ENCODE measurements at regions of chr1 and their contacts with region 1.

Region 1: DNA sequence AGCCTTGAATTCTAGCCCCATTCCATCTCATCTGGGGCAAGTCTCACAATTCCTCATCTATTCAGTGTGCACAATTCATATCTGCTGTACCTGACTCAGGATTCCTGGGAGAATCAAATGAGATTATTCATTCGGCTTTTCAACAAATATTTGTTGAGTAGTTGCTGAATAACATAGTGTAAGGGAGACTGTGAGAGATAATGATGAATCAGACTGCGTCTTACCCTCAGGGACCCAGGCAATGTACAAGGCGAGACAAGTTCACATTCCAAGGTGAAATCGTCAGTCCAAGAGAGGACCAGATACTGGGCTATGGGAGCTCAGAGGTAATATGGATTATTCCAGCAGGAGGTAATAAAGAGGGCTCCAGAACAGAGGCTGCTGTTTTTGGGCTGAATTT is 67.8 kb upstream of the SMYD2 start:
- DNase-seq: peak in 1 of 2 experiments; percentile 21
- H3K4me3 ChIP-seq: no peak overlapping the region
- H3K4me3 Mint-ChIP-seq: no peak overlapping the region
- H3K27ac Mint-ChIP-seq: peak overlapping the region; percentile 53
- H3K4me1 ChIP-seq: peaks cover 73% of the 10 kb centered on the region
- H3K4me1 Mint-ChIP-seq: peaks cover 42% of the 10 kb centered on the region
- H3K27me3 ChIP-seq: no peaks in the 10 kb centered on the region
- H3K27me3 Mint-ChIP-seq: no peaks in the 10 kb centered on the region
- CTCF ChIP-seq: no peak

Region 2: GRCh38 chr1:213864091-213864490 is 349.0 kb before region 1 on chr1:
- CTCF ChIA-PET with region 1: no interaction called
- POLR2A ChIA-PET with region 1: no interaction called
- intact Hi-C with region 1: no loop called
- DNase-seq: no peak
- H3K4me3 ChIP-seq: no peak overlapping the region
- H3K4me3 Mint-ChIP-seq: no peak overlapping the region
- H3K27ac Mint-ChIP-seq: no peak overlapping the region
- H3K4me1 ChIP-seq: no peaks in the 10 kb centered on the region
- H3K4me1 Mint-ChIP-seq: no peaks in the 10 kb centered on the region
- H3K27me3 ChIP-seq: no peaks in the 10 kb centered on the region
- H3K27me3 Mint-ChIP-seq: no peaks in the 10 kb centered on the region
- CTCF ChIP-seq: no peak

Region 3: DNA sequence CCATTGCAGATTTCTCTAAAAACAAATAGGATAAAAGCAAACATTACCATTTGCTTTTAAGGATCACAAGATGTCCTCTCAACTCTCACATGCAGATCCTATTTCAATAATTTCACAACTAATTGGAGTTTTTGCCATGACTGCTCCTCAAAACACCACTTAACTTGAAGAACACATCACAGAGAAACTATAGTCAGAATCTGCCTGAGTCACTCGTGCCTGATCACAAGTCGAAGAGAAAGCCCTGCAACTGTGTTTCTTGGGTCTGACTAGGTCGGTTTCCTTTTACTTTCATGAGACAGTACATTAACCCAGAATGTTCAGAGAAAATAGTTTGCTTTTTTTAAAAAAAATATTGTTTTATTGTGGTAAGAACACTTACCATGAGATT is 21.5 kb after region 1 on chr1:
- CTCF ChIA-PET with region 1: no interaction called
- POLR2A ChIA-PET with region 1: interaction called, 3 read pairs
- intact Hi-C with region 1: loop called (anchors 1 kb)
- DNase-seq: no peak
- H3K4me3 ChIP-seq: no peak overlapping the region
- H3K4me3 Mint-ChIP-seq: peak overlapping the region; percentile 17
- H3K27ac Mint-ChIP-seq: peak overlapping the region; percentile 1
- H3K4me1 ChIP-seq: peaks cover 14% of the 10 kb centered on the region
- H3K4me1 Mint-ChIP-seq: peaks cover 23% of the 10 kb centered on the region
- H3K27me3 ChIP-seq: no peaks in the 10 kb centered on the region
- H3K27me3 Mint-ChIP-seq: no peaks in the 10 kb centered on the region
- CTCF ChIP-seq: no peak

Region 4: DNA sequence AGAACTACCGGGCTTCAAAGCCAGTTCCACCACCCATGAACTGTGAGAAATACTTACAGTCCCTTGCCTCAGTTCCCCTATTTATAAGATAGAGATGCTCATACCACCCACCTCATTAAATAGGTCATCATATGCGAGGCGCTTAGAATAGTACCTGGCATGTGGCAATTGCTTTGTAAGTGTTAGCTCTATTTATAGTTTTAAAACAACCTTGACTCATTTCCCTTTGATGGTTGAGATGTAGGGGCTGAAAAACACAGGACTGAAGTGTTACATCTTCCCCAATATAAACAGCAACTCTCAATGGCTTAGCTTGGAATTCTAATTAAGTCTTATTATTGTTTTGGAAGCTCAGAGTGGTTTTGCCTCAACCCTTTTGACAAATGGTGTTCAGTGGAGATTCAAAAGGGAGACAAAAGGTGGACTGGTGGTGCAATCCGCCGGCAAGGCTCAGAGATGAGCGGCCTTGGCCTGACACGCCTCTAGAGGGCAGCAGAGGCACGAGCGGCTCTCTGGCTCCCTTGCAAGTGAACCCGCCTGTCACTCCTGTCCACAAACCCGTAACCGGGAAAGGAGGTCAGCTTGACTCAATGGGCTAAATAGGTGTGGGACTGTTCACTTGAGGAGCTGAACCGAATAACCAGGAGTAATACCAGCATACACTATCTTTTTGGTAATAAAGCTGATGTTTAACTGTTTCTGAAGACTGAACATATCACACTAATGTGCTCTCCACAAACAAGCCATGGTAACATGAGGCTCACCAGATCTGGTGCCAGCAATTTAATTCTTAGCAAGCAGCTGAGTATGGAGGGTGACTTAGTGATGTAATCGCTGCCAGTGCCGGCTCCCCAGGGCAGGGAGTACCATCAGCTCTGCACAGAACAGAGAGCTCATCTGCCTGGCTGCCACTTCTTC is 48.3 kb after region 1 on chr1:
- CTCF ChIA-PET with region 1: interaction called, 20 read pairs
- POLR2A ChIA-PET with region 1: no interaction called
- intact Hi-C with region 1: loop called (anchors 1 kb)
- DNase-seq: peak; percentile 87 to 94
- H3K4me3 ChIP-seq: no peak overlapping the region
- H3K4me3 Mint-ChIP-seq: no peak overlapping the region
- H3K27ac Mint-ChIP-seq: no peak overlapping the region
- H3K4me1 ChIP-seq: peaks cover 15% of the 10 kb centered on the region; the same call in 1 of the 2 replicates
- H3K4me1 Mint-ChIP-seq: peaks cover 35% of the 10 kb centered on the region
- H3K27me3 ChIP-seq: no peaks in the 10 kb centered on the region
- H3K27me3 Mint-ChIP-seq: no peaks in the 10 kb centered on the region
- CTCF ChIP-seq: peak; percentile 90 to 99

Region 5: DNA sequence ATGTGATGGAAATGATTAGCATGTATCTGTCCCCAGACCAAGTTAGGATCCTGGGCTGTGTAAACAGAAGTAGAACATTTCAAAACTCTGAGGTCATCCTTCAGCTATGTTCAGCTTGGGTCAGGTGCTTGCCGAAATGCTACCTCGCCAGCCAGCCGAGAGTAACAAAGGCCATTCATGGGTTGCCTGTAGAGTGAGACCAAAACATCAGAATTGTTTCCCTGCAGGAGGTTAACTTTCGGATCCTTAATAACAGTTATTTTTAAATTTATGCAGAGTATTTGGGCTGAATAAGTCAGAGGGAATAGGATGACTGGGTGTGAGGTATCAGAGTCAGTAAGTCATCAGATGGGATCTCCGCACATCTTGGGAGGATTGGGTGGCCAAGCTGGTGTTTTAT is 103.5 kb after region 1 on chr1:
- CTCF ChIA-PET with region 1: interaction called, 14 read pairs
- POLR2A ChIA-PET with region 1: no interaction called
- intact Hi-C with region 1: no loop called
- DNase-seq: peak in 1 of 2 experiments; percentile 27
- H3K4me3 ChIP-seq: no peak overlapping the region
- H3K4me3 Mint-ChIP-seq: no peak overlapping the region
- H3K27ac Mint-ChIP-seq: peak overlapping the region; percentile 30
- H3K4me1 ChIP-seq: peaks cover 14% of the 10 kb centered on the region; the same call in 1 of the 2 replicates
- H3K4me1 Mint-ChIP-seq: peaks cover 14% of the 10 kb centered on the region
- H3K27me3 ChIP-seq: no peaks in the 10 kb centered on the region
- H3K27me3 Mint-ChIP-seq: no peaks in the 10 kb centered on the region
- CTCF ChIP-seq: no peak

Region 6: GRCh38 chr1:214349781-214350180 is 136.6 kb after region 1 on chr1:
- CTCF ChIA-PET with region 1: interaction called, 11 read pairs
- POLR2A ChIA-PET with region 1: interaction called, 3 read pairs
- intact Hi-C with region 1: no loop called
- DNase-seq: peak; percentile 82 to 88
- H3K4me3 ChIP-seq: no peak overlapping the region
- H3K4me3 Mint-ChIP-seq: peak overlapping the region; percentile 70
- H3K27ac Mint-ChIP-seq: peak overlapping the region; percentile 97
- H3K4me1 ChIP-seq: peaks cover 46% of the 10 kb centered on the region
- H3K4me1 Mint-ChIP-seq: peaks cover 33% of the 10 kb centered on the region
- H3K27me3 ChIP-seq: no peaks in the 10 kb centered on the region
- H3K27me3 Mint-ChIP-seq: no peaks in the 10 kb centered on the region
- CTCF ChIP-seq: no peak

Region 7: GRCh38 chr1:214427871-214428277 is 214.7 kb after region 1 on chr1:
- CTCF ChIA-PET with region 1: no interaction called
- POLR2A ChIA-PET with region 1: no interaction called
- intact Hi-C with region 1: no loop called
- DNase-seq: no peak
- H3K4me3 ChIP-seq: no peak overlapping the region
- H3K4me3 Mint-ChIP-seq: no peak overlapping the region
- H3K27ac Mint-ChIP-seq: peak overlapping the region; percentile 58
- H3K4me1 ChIP-seq: peaks cover 10% of the 10 kb centered on the region; the same call in 1 of the 2 replicates
- H3K4me1 Mint-ChIP-seq: peaks cover 37% of the 10 kb centered on the region
- H3K27me3 ChIP-seq: no peaks in the 10 kb centered on the region
- H3K27me3 Mint-ChIP-seq: no peaks in the 10 kb centered on the region
- CTCF ChIP-seq: no peak

Region 8: GRCh38 chr1:214584805-214585766 is 371.9 kb after region 1 on chr1:
- CTCF ChIA-PET with region 1: interaction called, 4 read pairs
- POLR2A ChIA-PET with region 1: no interaction called
- intact Hi-C with region 1: loop called (anchors 1 kb)
- DNase-seq: peak in 1 of 2 experiments; percentile 17
- H3K4me3 ChIP-seq: no peak overlapping the region
- H3K4me3 Mint-ChIP-seq: no peak overlapping the region
- H3K27ac Mint-ChIP-seq: no peak overlapping the region
- H3K4me1 ChIP-seq: no peaks in the 10 kb centered on the region; the same call in 1 of the 2 replicates
- H3K4me1 Mint-ChIP-seq: peaks cover 7% of the 10 kb centered on the region
- H3K27me3 ChIP-seq: no peaks in the 10 kb centered on the region
- H3K27me3 Mint-ChIP-seq: no peaks in the 10 kb centered on the region
- CTCF ChIP-seq: peak; percentile 46 to 89

Region 9: DNA sequence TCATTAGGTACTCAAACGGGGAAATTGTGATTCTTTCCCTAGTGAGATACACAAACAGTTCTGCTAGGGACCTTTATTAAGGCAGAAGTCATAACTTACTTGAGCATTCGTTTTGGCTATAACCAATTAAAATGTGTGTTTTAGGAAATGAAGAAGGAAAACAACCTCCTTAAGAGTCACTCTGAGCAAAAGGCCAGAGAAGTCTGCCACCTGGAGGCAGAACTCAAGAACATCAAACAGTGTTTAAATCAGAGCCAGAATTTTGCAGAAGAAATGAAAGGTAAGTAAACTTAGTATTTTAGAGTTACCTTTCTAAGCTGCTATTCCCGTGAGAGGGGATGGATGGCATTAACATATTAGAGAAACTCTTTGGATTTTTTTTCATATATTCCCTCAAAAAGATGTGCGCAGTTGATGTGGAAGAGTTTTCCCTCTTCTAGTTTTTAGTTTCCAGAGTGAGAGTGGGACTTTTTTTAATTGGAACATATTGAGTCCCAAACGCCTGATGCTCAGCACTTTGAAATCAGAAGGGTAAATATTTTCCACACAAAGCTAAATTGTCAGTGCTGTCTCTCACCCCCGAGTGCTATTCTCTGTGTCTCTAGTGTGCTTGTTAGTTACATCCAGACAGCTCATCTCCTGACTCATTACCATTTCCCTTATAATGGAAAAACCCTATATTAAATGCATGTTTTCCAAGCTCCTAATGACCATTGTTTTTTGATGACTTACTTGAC is 424.8 kb after region 1 on chr1:
- CTCF ChIA-PET with region 1: no interaction called
- POLR2A ChIA-PET with region 1: no interaction called
- intact Hi-C with region 1: loop called (anchors 1 kb)
- DNase-seq: peak in 1 of 2 experiments; percentile 38
- H3K4me3 ChIP-seq: no peak overlapping the region
- H3K4me3 Mint-ChIP-seq: no peak overlapping the region
- H3K27ac Mint-ChIP-seq: no peak overlapping the region
- H3K4me1 ChIP-seq: no peaks in the 10 kb centered on the region
- H3K4me1 Mint-ChIP-seq: no peaks in the 10 kb centered on the region
- H3K27me3 ChIP-seq: no peaks in the 10 kb centered on the region
- H3K27me3 Mint-ChIP-seq: no peaks in the 10 kb centered on the region
- CTCF ChIP-seq: peak; percentile 70 to 76